Sciatic nerve (tissue), 2 donors: ENCODE measurements at regions of chr17 and their contacts with region 1.

Region 1: GRCh38 chr17:38967290-38967738 is at the start of gene FBXO47:
- DNase-seq: peak; percentile 96
- ATAC-seq: peak; percentile 99
- total RNA-seq, gene FBXO47: not detected

Region 2: DNA sequence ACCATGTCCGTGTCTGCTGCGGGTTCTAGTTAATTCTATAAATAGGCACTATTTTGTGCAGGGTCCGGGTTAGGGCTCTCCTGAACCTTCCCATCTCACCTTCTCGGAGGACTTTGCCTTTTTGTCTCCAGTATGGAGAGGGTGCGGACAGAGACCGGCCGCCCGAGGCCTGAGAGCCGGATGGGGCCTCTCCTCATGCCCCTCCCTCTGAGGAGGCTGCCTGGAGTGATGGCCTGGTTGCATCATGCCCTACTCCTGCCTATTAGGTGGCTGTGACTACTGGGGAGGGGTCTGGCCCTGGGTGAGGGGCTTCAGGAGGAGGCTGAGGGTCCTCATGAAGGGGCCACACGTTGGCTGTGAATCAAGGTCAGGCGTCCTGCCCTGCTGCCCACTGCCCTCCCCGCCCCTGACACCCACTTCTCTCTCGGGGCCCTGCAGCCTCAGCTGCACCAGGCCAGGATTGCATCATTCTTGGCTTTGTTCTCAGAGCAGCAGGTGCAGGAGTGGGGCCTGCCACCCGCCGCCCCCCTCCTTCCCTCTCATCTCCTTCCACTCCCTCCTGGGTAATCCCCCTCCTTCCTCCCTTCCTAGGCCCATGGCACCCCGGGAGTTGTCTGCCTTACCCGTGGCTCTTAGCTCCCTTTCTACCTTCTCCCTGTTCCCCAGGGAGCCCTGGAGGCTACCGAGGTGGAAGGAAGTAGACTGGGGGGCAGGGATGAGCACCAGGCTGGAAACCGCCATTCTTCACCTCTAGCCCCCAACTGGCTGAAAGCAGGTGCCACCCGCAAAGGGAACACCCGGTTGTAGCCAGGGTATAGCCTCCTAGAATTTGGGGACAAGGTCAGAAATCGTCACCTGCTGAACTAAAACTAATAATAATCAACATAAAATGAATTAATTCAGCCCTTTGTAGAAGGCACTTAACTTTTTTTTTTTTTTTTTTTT is 551.8 kb before region 1 on chr17:
- intact Hi-C with region 1: no loop called
- DNase-seq: no peak
- ATAC-seq: peak; percentile 60

Region 3: DNA sequence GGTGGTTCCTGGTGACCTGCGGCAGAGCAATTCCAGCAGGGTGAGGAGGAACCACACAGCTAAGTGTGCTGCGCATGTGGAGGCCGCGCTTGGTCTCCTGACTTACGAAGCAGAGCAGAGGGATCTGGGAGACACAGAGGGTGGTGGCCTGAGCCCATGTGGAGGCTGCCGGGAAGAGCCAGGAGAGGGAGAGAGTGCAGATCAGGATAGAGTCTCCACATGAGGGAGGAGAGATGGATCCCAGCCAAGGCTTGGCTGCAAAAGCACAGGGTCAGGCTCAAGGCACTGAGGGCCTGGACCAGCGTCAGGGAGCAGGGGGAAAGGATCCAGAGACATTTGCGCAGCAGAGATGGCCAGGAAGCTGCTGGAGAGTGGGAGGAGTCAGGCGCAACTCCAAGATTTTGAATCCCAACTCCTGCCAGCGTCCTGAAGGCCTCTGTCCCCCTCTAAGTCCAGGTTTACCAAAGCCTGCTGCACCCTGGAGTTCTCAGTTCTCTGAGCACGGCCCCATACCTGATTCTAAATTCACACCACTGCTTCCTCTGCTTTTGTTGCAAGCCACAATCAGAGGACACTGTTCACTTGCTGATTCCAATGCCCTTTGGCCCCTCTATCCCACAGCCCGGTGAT is 273.5 kb before region 1 on chr17:
- intact Hi-C with region 1: no loop called
- DNase-seq: peak; percentile 93
- ATAC-seq: peak; percentile 98

Region 4: DNA sequence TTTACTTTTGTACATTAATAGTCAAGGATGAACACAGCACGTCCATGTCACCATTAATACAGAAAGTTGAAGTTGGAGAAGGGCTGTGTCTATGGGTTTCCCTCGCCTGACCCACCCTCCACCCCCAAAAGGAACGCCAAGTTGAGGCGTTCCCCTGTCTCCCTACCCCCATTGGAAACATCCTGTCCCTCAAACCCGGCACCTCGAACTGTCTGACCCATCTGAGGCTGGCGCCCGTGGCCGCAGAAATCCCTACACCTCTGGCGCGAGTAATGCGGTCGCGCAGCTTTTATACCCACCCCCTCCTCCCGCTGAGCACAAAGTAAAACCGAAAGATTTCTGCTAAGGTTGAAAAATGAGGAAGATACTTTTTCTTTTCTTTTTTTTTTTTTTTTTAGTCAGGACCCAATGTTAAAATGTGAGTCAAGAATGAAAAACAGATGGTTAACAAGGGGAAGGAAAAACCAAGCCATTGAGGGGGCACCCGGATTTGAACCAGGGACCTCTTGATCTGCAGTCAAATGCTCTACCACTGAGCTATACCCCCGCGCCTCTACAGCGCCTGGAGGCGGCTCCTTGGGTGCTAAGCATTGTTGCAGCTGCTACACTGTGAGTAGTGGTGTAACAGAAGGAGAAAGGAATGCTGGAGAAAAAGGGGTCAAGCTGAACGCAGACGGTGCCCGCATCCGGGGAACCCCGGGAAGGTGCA is 98.3 kb before region 1 on chr17:
- intact Hi-C with region 1: loop called (anchors 5 kb)
- DNase-seq: peak; percentile 96
- ATAC-seq: peak; percentile 85

Region 5: DNA sequence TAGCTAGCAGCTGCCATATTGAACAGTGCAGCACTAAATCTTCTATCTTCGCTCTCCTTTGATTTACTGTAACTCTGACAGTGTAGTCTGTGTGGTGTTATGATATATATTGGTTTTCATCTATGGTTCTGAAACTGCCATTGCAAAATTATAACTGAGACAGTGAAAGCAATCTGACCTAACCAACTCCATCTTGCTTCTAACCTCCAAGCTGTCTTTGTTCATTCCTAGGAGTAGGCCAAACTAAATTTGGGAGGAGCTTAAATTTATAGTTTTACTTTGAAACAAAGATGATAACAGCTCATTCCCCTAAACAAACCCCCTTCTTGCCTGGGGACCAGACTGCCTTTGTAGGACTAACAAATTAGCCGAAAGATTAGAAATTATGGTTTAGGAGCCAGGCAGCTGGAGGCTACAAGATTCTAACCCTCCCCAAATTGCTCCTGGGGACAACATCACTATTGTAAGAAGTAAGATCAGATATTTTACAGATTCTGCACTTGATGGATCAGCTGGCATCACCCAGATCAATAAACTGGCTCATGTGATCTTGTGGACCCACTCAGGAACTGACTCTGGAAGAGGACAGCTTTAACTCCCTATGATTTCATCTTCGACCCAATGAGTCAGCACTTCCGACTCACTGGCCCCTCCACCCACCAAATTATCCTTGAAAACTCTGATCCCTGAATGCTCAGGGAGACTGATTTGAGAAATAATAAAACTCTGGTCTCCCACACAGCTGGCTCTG is 46.9 kb after region 1 on chr17:
- intact Hi-C with region 1: no loop called
- DNase-seq: no peak
- ATAC-seq: peak; percentile 49

Region 6: GRCh38 chr17:39118674-39119419 is 151.5 kb after region 1 on chr17:
- intact Hi-C with region 1: no loop called
- DNase-seq: no peak
- ATAC-seq: peak; percentile 40